Heart left ventricle (tissue), 16 donors: ENCODE measurements at regions of chr16 and their contacts with region 1.

Region 1: DNA sequence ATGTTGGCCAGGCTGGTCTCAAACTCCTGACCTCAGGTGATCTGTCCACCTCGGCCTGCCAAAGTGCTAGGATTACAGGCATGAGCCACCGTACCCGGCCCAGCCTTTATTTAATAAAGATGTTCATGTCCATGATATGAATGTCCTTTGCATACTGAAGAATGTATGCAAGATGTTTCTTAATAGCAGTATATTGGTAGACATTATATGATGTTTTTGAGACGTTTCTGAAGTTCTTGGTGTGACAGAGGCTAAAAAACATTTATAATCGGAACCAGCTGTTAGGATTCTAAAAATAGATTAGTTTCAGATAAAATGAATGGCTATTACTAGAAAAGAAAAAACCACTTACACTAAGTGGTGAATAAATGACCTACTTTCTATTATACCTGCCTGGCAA is 11.8 kb downstream of the PDZD9 start:
- DNase-seq: no peak
- ATAC-seq: no peak
- H3K4me3 ChIP-seq: no peak overlapping the region
- H3K27ac ChIP-seq: no peak overlapping the region
- H3K4me1 ChIP-seq: peaks cover 7 to 58% (median 40%) of the 10 kb centered on the region in 12 donors
- H3K27me3 ChIP-seq: no peaks in the 10 kb centered on the region
- CTCF ChIP-seq: no peak
- POLR2A ChIP-seq: no peak

Region 2: GRCh38 chr16:21964353-21964752 is 24.8 kb before region 1 on chr16:
- intact Hi-C with region 1: loop called in 1 of 10 experiments (anchors 2 kb)
- DNase-seq: no peak
- ATAC-seq: peak in 1 of 4 donors; percentile 76
- H3K4me3 ChIP-seq: no peak overlapping the region
- H3K27ac ChIP-seq: peak overlapping the region in 9 of 12 donors; percentile 6 to 67 (median 41)
- H3K4me1 ChIP-seq: peaks cover 0 to 20% (median 3%) of the 10 kb centered on the region in 12 donors
- H3K27me3 ChIP-seq: no peaks in the 10 kb centered on the region
- CTCF ChIP-seq: no peak
- POLR2A ChIP-seq: no peak

Region 3: GRCh38 chr16:21971856-21972255 is 17.3 kb before region 1 on chr16:
- intact Hi-C with region 1: loop called in 1 of 10 experiments (anchors 2 kb)
- DNase-seq: no peak
- ATAC-seq: no peak
- H3K4me3 ChIP-seq: no peak overlapping the region
- H3K27ac ChIP-seq: no peak overlapping the region
- H3K4me1 ChIP-seq: no peaks in the 10 kb centered on the region
- H3K27me3 ChIP-seq: no peaks in the 10 kb centered on the region
- CTCF ChIP-seq: no peak
- POLR2A ChIP-seq: no peak